Common myeloid progenitor, CD34-positive (primary cell): ENCODE measurements at regions of chr9 and their contacts with region 1.

Region 1: DNA sequence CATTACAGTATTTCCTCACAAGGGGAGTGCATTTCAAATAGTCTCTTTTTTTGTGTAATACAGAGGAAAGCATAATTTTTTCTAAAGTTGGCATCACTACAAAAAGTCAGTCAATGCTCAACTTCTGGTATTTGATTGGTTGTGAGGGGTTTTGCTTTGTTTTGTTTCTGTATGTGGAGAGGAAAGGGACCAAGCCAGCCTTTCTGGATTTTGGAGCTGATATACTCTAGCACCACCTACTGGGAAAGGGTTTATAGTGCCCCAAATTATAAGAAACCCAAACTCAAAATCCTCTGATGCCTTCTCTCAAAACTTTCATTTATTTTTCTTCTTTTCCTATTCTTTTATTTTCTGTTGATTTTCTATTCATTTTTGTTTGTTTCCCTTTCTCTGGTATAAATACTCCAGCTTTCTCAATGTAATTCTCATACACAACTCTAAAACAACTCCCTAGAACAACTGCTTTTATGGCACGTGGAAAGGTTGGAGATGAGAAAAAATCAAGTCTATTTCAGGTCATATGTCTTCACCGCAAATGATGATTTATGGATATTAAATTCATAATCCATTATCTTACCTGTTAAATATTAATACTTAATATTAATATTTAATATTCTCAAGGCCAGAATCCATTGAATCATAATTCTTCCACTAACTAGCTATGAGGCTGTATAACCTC is 69.5 kb upstream of the ANXA1 start:
- DNase-seq: peak; percentile 59 to 80 (median 73)
- H3K4me3 ChIP-seq: no peak overlapping the region
- H3K27ac ChIP-seq: no peak overlapping the region
- H3K4me1 ChIP-seq: no peaks in the 10 kb centered on the region
- H3K27me3 ChIP-seq: no peaks in the 10 kb centered on the region

Region 2: GRCh38 chr9:72856972-72857623 is 225.0 kb before region 1 on chr9:
- CTCF ChIA-PET with region 1: interaction called, 86 read pairs
- POLR2A ChIA-PET with region 1: no interaction called
- DNase-seq: peak; percentile 72 to 86 (median 80)
- H3K4me3 ChIP-seq: no peak overlapping the region
- H3K27ac ChIP-seq: no peak overlapping the region
- H3K4me1 ChIP-seq: peaks cover 0 to 4% (median 2%) of the 10 kb centered on the region in 4 experiments
- H3K27me3 ChIP-seq: no peaks in the 10 kb centered on the region